ENCODE measurements at regions of chr7 and their contacts with region 1.

Region 1: GRCh38 chr7:1403638-1404459 is 55.4 kb downstream of the MICALL2 start:
- DNase-seq: no peak
- ATAC-seq: no peak
- H3K4me3 ChIP-seq: no peak overlapping the region
- H3K27ac ChIP-seq: no peak overlapping the region
- H3K4me1 ChIP-seq: no peaks in the 10 kb centered on the region
- H3K27me3 ChIP-seq: peaks cover 0 to 11% of the 10 kb centered on the region in 2 donors
- CTCF ChIP-seq: no peak
- POLR2A ChIP-seq: no peak

Region 2: GRCh38 chr7:909358-910329 is 494.2 kb before region 1 on chr7:
- intact Hi-C with region 1: no loop called
- DNase-seq: peak; percentile 74 to 81 (median 77)
- ATAC-seq: peak; percentile 49 to 65 (median 52)
- H3K4me3 ChIP-seq: peak overlapping the region in 2 of 3 donors; percentile 28 to 32
- H3K27ac ChIP-seq: no peak overlapping the region
- H3K4me1 ChIP-seq: no peaks in the 10 kb centered on the region
- H3K27me3 ChIP-seq: no peaks in the 10 kb centered on the region
- CTCF ChIP-seq: no peak
- POLR2A ChIP-seq: no peak

Region 3: DNA sequence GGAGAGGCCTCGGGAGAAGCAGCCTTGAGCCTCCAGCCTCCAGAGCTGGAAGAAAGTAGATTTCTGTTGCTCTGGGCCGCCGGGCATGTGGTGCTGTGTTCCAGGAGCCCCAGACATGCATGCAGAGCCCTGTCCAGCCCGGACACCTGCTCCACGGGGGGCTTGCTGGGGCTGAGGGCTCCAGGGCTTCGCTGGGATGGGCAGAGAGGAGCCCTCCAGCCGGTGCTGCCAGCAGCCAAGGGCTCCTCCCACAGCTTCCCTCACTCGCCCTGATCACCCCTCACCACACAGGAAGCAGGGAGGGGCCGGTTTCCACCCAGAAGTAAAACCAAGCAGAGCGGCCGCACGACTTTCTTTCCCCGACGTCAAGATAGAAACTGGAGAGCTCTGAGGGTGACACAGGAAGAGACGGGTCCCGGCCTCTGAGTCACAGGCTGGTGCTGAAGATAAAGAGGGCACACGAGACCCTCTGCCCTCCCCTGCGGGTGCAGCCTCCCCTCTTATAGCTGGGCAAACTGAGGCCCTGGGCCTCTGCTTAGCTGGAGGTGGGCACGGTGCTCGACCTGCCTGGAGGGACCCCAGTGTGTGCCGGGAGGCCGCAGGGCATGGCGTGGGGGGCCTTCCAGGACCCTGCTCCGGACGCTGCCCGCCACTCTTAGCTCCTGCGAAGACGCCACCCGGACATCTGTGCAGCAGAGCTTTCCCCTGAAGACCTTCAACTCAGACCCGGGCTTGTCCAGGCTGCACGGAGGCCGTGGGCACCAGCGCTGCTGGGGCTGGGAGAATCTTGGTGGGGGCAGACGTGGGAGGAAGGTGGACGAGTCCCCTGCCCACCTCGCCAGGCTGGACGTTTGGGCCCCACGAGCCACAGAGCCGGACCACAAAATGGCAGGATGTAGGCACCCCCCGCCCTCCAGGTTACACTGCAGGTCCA is 480.5 kb before region 1 on chr7:
- intact Hi-C with region 1: no loop called
- DNase-seq: peak; percentile 70 to 82 (median 78)
- ATAC-seq: peak; percentile 67 to 83 (median 74)
- H3K4me3 ChIP-seq: no peak overlapping the region
- H3K27ac ChIP-seq: peak overlapping the region; percentile 21 to 60 (median 44)
- H3K4me1 ChIP-seq: no peaks in the 10 kb centered on the region
- H3K27me3 ChIP-seq: no peaks in the 10 kb centered on the region
- CTCF ChIP-seq: no peak
- POLR2A ChIP-seq: no peak

Region 4: GRCh38 chr7:1210321-1210978 is 193.4 kb before region 1 on chr7:
- intact Hi-C with region 1: loop called in 1 of 2 experiments (anchors 10 kb)
- DNase-seq: no peak
- ATAC-seq: no peak
- H3K4me3 ChIP-seq: no peak overlapping the region
- H3K27ac ChIP-seq: no peak overlapping the region
- H3K4me1 ChIP-seq: no peaks in the 10 kb centered on the region
- H3K27me3 ChIP-seq: no peaks in the 10 kb centered on the region
- CTCF ChIP-seq: no peak
- POLR2A ChIP-seq: no peak

Region 5: GRCh38 chr7:1323178-1324030 is 80.4 kb before region 1 on chr7:
- intact Hi-C with region 1: no loop called
- DNase-seq: no peak
- ATAC-seq: peak in 1 of 4 donors; percentile 4
- H3K4me3 ChIP-seq: no peak overlapping the region
- H3K27ac ChIP-seq: no peak overlapping the region
- H3K4me1 ChIP-seq: no peaks in the 10 kb centered on the region
- H3K27me3 ChIP-seq: no peaks in the 10 kb centered on the region
- CTCF ChIP-seq: no peak
- POLR2A ChIP-seq: no peak

Region 6: DNA sequence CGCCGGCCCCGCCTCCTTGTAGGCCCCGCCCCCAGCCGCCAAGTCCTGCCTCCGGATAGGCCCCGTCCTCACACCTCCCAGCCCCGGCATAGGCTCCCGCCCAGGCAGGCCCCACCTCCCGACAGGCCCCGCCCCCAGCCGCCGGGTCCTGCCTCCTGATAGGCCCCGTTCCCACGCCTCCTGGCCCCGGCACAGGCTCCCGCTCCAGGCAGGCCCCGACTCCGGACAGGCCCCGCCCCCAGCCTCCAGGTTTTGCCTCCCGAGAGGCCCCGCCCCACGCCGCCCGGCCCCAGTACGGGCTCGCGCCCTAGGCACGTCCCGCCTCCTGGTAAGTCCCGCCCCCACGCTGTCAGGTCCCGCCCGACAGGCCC is 55.7 kb after region 1 on chr7:
- intact Hi-C with region 1: no loop called
- DNase-seq: peak; percentile 100
- ATAC-seq: peak; percentile 82 to 94 (median 88)
- H3K4me3 ChIP-seq: peak overlapping the region; percentile 63 to 76 (median 64)
- H3K27ac ChIP-seq: peak overlapping the region in 2 of 3 donors; percentile 67 to 97
- H3K4me1 ChIP-seq: peaks cover 0 to 40% (median 10%) of the 10 kb centered on the region in 4 donors
- H3K27me3 ChIP-seq: no peaks in the 10 kb centered on the region
- CTCF ChIP-seq: no peak
- POLR2A ChIP-seq: no peak